ENCODE measurements at regions of chr10 and their contacts with region 1.

Region 1: DNA sequence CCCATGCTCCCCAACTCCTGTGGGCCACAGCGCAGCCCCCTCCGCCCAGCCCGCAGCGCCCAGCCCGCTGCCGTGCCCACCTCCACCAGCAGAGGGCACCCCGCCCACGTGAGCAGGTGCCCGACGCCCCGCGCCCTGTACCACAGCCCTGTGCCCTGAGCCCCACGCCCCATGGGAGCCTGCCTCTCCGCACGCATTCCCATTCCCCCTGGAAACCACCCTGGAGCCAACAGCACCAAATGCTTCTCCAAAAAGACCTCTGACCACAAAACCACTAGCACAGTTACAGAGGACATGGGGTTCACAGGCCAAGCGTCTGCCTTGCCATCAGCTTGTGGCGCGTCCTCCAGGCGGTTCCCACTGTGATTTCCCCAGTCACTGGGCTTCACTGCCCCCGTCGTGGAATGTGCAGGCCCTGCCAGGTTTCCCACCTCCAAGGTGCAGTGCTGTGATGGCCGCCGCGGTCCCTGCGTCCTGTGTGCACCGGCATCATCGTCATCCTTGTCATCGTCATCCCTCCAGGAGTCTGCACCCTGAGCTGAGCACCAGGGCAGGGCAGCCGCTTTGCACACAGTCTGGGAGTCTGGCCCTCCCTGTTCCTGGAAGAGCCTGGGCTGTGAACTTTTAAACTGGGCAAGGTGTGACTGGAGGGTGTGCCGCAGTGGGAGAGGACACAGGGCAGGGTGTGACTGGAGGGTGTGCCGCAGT is 61.7 kb downstream of the PWWP2B start:
- DNase-seq: no peak

Region 2: DNA sequence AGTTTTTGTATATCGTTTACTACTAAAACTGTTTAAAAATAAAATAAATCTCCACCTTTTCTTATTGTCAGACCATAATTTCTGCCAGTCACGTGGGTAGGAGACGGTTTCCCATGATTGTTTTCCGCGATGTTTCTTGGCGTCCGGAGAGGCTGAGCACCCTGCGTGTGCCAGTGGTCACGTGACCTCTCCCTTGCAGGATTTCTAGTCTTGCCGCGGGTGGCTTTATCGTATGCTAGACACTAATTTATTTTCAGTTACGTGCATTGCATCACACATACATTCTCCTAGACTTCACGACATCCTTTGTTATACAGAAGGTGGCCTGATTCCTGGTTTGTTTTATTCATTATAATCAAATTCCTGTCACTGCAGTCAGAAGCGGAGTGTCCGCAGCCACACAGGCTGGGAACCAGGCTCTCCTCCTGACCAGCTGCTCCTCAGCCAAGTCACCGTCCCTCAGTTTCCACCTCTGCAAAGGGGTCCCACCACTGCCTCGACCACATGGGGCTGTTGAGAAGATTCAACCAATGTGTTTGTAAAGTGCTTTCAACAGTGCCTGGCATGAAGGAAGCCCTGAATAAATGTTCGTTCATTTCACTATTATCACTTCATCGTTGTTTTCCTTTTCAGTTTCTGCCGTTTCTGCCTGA is 761.1 kb before region 1 on chr10:
- intact Hi-C with region 1: no loop called
- DNase-seq: no peak

Region 3: GRCh38 chr10:132482090-132482800 is 23.5 kb after region 1 on chr10:
- intact Hi-C with region 1: no loop called
- DNase-seq: no peak

Region 4: GRCh38 chr10:132516771-132517725 is 58.3 kb after region 1 on chr10:
- intact Hi-C with region 1: loop called in 1 of 2 experiments (anchors 10 kb)
- DNase-seq: peak; percentile 98

Region 5: GRCh38 chr10:132575356-132576201 is 116.8 kb after region 1 on chr10:
- intact Hi-C with region 1: loop called in 1 of 2 experiments (anchors 5 kb)
- DNase-seq: no peak

Region 6: GRCh38 chr10:132643709-132644526 is 185.2 kb after region 1 on chr10:
- intact Hi-C with region 1: loop called (anchors 2 kb)
- DNase-seq: no peak

Region 7: DNA sequence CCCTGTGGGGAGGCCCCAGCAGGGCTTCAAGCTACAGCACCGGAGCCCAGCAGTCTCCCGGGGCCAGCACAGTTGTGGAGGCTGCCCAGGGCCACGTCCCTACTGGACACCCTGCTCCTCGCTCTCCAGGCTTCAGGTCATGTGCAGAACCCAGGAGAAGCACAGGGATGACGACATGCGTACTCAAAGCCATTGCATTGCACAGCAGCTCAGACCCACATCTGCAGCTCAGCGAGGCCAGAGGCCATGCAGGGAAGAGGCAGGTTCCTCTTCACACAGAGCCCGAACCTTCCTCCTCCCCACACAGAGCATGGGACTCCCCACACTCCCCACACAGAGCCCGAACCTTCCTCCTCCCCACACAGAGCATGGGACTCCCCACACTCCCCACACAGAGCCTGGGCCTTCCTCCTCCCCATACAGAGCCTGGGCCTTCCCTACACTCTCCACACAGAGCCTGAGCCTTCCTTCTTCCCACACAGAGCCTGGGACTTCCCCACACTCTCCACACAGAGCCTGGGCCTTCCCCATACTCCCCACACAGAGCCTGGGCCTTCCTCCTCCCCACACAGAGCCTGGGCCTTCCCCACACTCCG is 471.3 kb after region 1 on chr10:
- intact Hi-C with region 1: no loop called
- DNase-seq: peak; percentile 24